Caco-2 (cell line): ENCODE measurements at regions of chr15 and their contacts with region 1.

Region 1: DNA sequence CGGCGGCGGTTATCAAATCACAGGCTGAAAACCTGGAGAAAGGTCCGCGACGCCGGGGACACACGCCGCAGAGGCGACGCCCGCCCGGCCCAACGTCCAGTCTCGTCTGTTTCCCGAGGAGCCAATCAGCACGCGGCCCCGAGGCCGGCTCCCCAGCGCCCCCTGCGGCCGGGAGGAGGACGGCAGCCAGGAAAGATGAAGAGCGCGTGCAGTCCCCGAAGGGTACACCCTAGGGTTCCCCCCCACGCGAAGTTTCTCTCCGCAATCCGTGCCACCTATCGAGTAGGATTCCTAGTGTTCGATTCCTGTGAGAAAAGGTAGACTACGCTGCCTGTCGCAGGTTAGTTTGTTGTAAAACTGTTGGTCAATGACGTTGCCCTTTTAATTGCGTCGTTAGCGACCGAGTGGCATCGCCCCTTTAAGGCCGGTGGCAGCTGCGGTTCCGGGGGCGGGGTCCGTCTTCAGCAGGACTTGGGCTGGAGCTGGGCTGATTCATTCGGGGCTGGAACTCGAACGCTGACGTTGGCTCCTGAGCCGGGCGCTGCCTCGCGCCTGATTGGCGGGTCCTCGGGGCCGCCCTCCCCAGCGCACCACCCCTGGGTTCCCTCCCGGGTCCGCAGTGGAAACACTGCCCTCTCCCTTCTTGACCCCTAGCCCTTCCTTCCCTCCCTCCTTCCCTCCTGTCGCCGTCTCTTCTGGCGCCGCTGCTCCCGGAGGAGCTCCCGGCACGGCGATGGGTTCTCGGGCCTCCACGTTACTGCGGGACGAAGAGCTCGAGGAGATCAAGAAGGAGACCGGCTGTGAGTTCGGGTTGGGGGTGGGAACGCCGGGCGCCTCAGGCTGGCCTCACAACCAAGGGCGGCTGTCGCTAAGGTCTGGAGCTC is at the starts of genes CHP1 and EXD1:
- DNase-seq: peak; percentile 97 to 98
- H3K4me3 ChIP-seq: peak within 1 kb of the TSS; percentile 68
- H3K4me3 Mint-ChIP-seq: peak within 1 kb of the TSS; percentile 85
- H3K27ac Mint-ChIP-seq: peak within 1 kb of the TSS; percentile 91
- H3K4me1 ChIP-seq: peaks cover 6% of the 10 kb centered on the region; the same call in 1 of the 2 replicates
- H3K4me1 Mint-ChIP-seq: no peaks in the 10 kb centered on the region
- H3K27me3 ChIP-seq: no peaks in the 10 kb centered on the region
- H3K27me3 Mint-ChIP-seq: no peaks in the 10 kb centered on the region
- CTCF ChIP-seq: peak; percentile 83 to 93
- total RNA-seq, gene CHP1: 129 and 139 TPM in 2 replicates
- total RNA-seq, gene EXD1: not detected in 2 replicates

Region 2: GRCh38 chr15:41116116-41116871 is 114.6 kb before region 1 on chr15 and contains the start of gene INO80:
- CTCF ChIA-PET with region 1: no interaction called
- POLR2A ChIA-PET with region 1: interaction called, 6 read pairs
- intact Hi-C with region 1: loop called (anchors 5 kb)
- DNase-seq: peak; percentile 97 to 99
- H3K4me3 ChIP-seq: peak within 1 kb of the TSS; percentile 99
- H3K4me3 Mint-ChIP-seq: peak within 1 kb of the TSS; percentile 89
- H3K27ac Mint-ChIP-seq: peak within 1 kb of the TSS; percentile 100
- H3K4me1 ChIP-seq: no peaks in the 10 kb centered on the region
- H3K4me1 Mint-ChIP-seq: no peaks in the 10 kb centered on the region
- H3K27me3 ChIP-seq: no peaks in the 10 kb centered on the region
- H3K27me3 Mint-ChIP-seq: no peaks in the 10 kb centered on the region
- CTCF ChIP-seq: no peak
- total RNA-seq, gene INO80: 24.4 and 25.3 TPM in 2 replicates

Region 3: GRCh38 chr15:41207687-41208448 is 23.0 kb before region 1 on chr15:
- CTCF ChIA-PET with region 1: interaction called, 4 read pairs
- POLR2A ChIA-PET with region 1: no interaction called
- intact Hi-C with region 1: loop called (anchors 2 kb)
- DNase-seq: no peak
- H3K4me3 ChIP-seq: no peak overlapping the region
- H3K4me3 Mint-ChIP-seq: no peak overlapping the region
- H3K27ac Mint-ChIP-seq: no peak overlapping the region
- H3K4me1 ChIP-seq: no peaks in the 10 kb centered on the region
- H3K4me1 Mint-ChIP-seq: no peaks in the 10 kb centered on the region
- H3K27me3 ChIP-seq: no peaks in the 10 kb centered on the region
- H3K27me3 Mint-ChIP-seq: peaks cover 3% of the 10 kb centered on the region
- CTCF ChIP-seq: no peak

Region 4: DNA sequence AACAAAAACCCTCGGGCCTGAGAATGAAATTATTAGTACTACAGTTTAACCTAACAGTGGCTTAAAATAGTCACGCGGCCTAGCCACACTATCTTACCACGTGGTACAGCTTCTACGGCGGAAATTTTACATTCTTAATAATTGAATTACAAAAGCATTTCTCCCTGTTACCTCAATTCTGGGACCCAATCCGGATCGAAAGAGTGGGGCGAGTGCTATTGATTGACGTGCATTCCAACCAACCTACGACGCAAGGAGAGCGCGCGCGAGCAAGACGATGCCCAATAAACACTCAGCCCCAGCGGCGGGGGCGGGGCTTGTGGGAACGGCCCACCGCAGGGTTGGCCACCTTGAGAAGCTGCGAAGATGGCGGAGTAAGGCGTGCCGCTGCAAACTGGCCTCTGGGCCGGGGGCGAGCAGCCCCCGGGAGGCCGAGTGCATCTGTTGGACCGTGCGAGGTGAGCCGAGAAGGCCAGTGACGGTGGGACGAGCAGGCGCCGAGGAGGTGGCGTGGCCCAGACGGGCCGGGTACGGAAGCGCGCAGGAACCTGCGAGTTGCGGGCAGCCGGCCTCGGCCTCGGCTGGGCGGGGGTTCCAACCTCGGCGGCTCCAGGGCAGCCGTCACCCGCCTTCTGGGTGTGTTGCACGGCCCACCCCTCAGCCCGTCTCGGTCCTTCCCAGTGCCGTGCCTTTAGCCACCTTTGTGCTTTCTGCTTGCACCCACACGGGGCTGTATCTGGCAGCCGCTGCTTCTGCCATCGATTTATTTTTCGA is 52.9 kb after region 1 on chr15:
- CTCF ChIA-PET with region 1: no interaction called
- POLR2A ChIA-PET with region 1: interaction called, 9 read pairs
- intact Hi-C with region 1: loop called (anchors 2 kb)
- DNase-seq: peak; percentile 98
- H3K4me3 ChIP-seq: peak overlapping the region; percentile 81
- H3K4me3 Mint-ChIP-seq: peak overlapping the region; percentile 95
- H3K27ac Mint-ChIP-seq: peak overlapping the region; percentile 97
- H3K4me1 ChIP-seq: peaks cover 11% of the 10 kb centered on the region; the same call in 1 of the 2 replicates
- H3K4me1 Mint-ChIP-seq: peaks cover 14% of the 10 kb centered on the region
- H3K27me3 ChIP-seq: no peaks in the 10 kb centered on the region
- H3K27me3 Mint-ChIP-seq: no peaks in the 10 kb centered on the region
- CTCF ChIP-seq: no peak

Region 5: DNA sequence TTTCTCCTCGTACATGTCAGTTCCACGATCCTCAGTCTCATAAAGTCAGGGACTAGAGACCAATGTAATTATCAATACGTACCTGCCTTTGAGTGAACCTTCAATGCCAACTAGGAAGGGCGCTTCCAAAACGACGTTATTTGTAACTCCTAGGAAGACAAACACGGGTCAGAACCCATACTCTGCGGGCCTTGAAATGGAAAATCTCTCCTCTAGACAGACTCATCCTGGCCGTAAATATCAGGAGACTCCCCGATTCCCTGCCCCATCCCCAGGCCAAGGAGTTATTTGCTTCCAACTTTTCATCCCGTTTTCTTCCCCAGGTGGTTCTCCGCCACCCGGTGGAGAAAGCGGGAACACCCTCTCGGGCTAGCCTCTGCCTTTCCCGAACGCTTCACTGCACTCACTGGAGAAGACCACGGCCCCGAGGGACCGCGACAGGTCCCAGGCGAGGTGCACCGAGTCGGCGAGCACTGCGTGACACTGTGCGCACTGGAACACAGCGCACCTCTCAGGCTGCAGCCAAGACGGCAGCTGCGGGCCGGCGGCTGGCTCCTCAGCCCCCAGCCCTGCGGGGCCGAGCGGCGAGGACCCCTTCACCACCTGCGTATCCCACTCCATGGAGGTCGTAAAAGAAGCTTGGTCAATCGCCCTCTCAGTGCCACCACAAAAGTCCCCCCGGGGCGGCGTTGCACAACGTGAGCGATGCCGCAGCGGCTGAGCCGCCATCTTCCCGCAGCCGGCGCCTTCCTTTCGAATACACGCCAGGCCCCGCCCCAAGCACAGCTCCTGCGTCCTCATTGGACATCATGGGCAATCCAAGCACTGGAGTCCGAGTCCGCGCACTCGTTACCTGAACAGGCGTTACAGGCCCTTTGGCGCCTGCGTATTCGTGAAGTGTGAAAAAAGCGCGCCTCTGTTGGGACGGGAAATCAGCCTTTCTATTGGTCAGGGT is 101.2 kb after region 1 on chr15 and contains the start of gene OIP5:
- CTCF ChIA-PET with region 1: interaction called, 9 read pairs
- POLR2A ChIA-PET with region 1: interaction called, 7 read pairs
- intact Hi-C with region 1: loop called (anchors 1 kb)
- DNase-seq: peak; percentile 98 to 99
- H3K4me3 ChIP-seq: peak within 1 kb of the TSS; percentile 87
- H3K4me3 Mint-ChIP-seq: peak within 1 kb of the TSS; percentile 89
- H3K27ac Mint-ChIP-seq: peak within 1 kb of the TSS; percentile 97
- H3K4me1 ChIP-seq: peaks cover 4% of the 10 kb centered on the region; the same call in 1 of the 2 replicates
- H3K4me1 Mint-ChIP-seq: peaks cover 9% of the 10 kb centered on the region
- H3K27me3 ChIP-seq: no peaks in the 10 kb centered on the region
- H3K27me3 Mint-ChIP-seq: no peaks in the 10 kb centered on the region
- CTCF ChIP-seq: peak; percentile 63 to 82
- total RNA-seq, gene OIP5: 23.4 and 26.4 TPM in 2 replicates